Adrenal gland (tissue), 19 donors: ENCODE measurements at regions of chr9 and their contacts with region 1.

Region 1: DNA sequence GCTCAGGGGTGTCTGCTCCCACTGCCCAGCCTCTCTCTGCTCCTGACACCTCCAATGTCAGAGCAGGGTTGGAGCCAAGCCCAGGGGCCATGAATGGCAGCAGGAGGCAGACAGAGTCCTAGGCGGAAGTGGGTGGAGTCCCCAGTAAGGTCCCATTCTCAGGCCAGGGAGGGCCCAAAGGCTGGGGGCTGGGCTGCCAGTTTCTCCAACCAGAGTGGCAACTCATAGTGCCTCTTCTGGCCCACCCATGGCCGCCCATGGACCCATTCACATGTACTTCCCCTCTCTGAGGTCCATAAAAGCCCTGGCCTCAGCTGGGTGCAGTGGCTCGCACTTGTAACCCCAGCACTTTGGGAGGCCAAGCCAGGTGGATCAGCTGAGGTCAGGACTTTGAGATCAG is 261.8 kb upstream of the TNC start:
- DNase-seq: no peak
- H3K4me3 ChIP-seq: no peak overlapping the region
- H3K27ac ChIP-seq: no peak overlapping the region
- H3K4me1 ChIP-seq: no peaks in the 10 kb centered on the region
- H3K27me3 ChIP-seq: no peaks in the 10 kb centered on the region
- CTCF ChIP-seq: no peak
- POLR2A ChIP-seq: no peak

Region 2: GRCh38 chr9:115439641-115440040 is 59.9 kb after region 1 on chr9:
- intact Hi-C with region 1: loop called in 1 of 2 experiments (anchors 5 kb)
- DNase-seq: no peak
- H3K4me3 ChIP-seq: no peak overlapping the region
- H3K27ac ChIP-seq: no peak overlapping the region
- H3K4me1 ChIP-seq: no peaks in the 10 kb centered on the region
- H3K27me3 ChIP-seq: no peaks in the 10 kb centered on the region
- CTCF ChIP-seq: no peak
- POLR2A ChIP-seq: no peak